CD4-positive, alpha-beta T cell (primary cell): ENCODE measurements at regions of chr13 and their contacts with region 1.

Region 1: DNA sequence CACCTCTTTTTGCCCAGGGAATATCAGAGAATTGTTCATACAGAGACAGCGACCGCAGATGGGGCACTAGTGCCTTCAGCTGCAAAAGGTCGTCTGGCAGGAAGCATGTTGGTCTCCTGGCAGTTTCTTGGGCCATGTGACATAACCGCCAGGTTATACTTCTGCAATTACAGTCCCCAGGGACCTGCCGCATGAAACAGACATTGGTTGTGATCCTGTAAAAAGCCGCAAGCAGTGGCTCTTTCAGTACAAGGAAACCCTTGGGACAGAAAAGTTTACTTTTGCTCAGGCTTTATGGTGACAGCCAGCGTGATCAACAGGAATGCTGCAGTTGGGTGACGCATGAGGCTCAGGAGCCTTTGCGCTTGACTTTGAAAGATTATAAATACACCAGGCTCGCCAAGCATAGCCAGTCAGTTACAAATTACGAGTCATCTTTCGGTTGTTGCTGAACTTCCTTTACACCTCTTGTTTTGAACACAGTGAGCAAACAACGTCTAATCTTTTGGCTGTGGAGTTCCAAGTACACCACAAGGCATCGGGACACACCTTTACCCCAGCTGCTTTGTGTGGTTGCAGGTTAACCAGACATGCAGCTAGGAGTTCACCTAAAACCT is 50.5 kb upstream of the UBE2L5 start:
- DNase-seq: peak; percentile 47 to 91 (median 60)
- ATAC-seq: peak; percentile 64
- H3K4me3 ChIP-seq: peak overlapping the region; percentile 30
- H3K4me3 Mint-ChIP-seq: peak overlapping the region; percentile 21
- H3K27ac ChIP-seq: peak overlapping the region; percentile 62 to 74
- H3K27ac Mint-ChIP-seq: peak overlapping the region; percentile 93
- H3K4me1 ChIP-seq: peaks cover 93% of the 10 kb centered on the region
- H3K4me1 Mint-ChIP-seq: peaks cover 82% of the 10 kb centered on the region
- H3K27me3 ChIP-seq: no peaks in the 10 kb centered on the region
- H3K27me3 Mint-ChIP-seq: no peaks in the 10 kb centered on the region
- CTCF ChIP-seq: no peak

Region 2: GRCh38 chr13:30346153-30346788 is 25.5 kb before region 1 on chr13:
- CTCF ChIA-PET with region 1: interaction called, 3 read pairs
- POLR2A ChIA-PET with region 1: interaction called, 22 read pairs
- intact Hi-C with region 1: no loop called
- DNase-seq: peak; percentile 30 to 89 (median 56)
- ATAC-seq: peak; percentile 93
- H3K4me3 ChIP-seq: peak overlapping the region; percentile 18
- H3K4me3 Mint-ChIP-seq: peak overlapping the region; percentile 61
- H3K27ac ChIP-seq: no peak overlapping the region
- H3K27ac Mint-ChIP-seq: peak overlapping the region; percentile 62
- H3K4me1 ChIP-seq: peaks cover 38% of the 10 kb centered on the region
- H3K4me1 Mint-ChIP-seq: peaks cover 55% of the 10 kb centered on the region
- H3K27me3 ChIP-seq: no peaks in the 10 kb centered on the region
- H3K27me3 Mint-ChIP-seq: no peaks in the 10 kb centered on the region
- CTCF ChIP-seq: no peak

Region 3: GRCh38 chr13:30388406-30389283 is 16.9 kb after region 1 on chr13:
- CTCF ChIA-PET with region 1: interaction called, 51 read pairs
- POLR2A ChIA-PET with region 1: interaction called, 254 read pairs
- intact Hi-C with region 1: loop called in 1 of 2 experiments (anchors 2 kb)
- DNase-seq: no peak
- ATAC-seq: no peak
- H3K4me3 ChIP-seq: peak overlapping the region; percentile 25
- H3K4me3 Mint-ChIP-seq: peak overlapping the region; percentile 60
- H3K27ac ChIP-seq: peak overlapping the region; percentile 38 to 56
- H3K27ac Mint-ChIP-seq: peak overlapping the region; percentile 75
- H3K4me1 ChIP-seq: peaks cover 41% of the 10 kb centered on the region
- H3K4me1 Mint-ChIP-seq: peaks cover 52% of the 10 kb centered on the region
- H3K27me3 ChIP-seq: no peaks in the 10 kb centered on the region
- H3K27me3 Mint-ChIP-seq: no peaks in the 10 kb centered on the region
- CTCF ChIP-seq: no peak

Region 4: DNA sequence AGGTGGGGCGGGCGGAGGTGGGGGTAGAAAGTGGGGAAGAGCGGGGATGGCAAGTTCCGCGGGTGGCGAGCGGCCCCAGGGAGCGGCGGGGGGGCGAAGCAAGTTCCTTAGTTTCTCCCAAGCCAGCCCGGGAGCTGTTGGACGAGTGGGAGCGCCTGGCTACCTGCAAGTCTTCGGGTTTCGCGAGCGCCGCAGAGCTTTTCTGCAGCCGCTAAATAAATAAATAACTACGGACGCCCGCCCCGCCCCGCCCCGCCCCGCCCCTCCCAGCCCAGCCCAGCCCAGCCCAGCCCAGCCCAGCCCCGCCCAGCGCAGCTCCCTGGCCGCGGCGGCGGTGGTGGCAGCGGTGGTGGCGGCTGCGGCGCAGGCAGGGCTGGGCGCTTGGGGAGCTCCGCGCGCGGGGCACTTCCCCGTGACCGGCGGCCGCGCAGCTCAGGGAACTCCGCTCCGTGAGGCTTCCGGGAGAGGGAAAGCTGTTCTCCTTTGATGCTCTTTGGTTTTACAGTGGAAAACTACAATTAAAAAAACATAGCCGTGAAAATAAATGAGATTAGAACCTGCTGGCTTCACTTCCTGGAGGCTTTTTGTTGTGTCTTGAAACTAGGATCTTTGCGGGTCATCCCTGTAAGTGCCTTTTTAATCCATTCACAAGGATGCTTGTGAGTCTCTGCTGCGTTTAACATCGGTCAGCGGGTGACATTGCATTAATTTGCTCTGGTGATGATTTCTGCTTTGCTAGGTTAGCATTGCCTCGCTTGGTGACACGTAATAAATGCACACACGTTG is 50.5 kb after region 1 on chr13 and contains the start of gene UBE2L5:
- CTCF ChIA-PET with region 1: interaction called, 4 read pairs
- POLR2A ChIA-PET with region 1: interaction called, 12 read pairs
- intact Hi-C with region 1: loop called in 1 of 2 experiments (anchors 2 kb)
- DNase-seq: peak in 13 of 14 experiments; percentile 40 to 88 (median 60)
- ATAC-seq: peak; percentile 93
- H3K4me3 ChIP-seq: peak within 1 kb of the TSS; percentile 60
- H3K4me3 Mint-ChIP-seq: peak within 1 kb of the TSS; percentile 91
- H3K27ac ChIP-seq: peak within 1 kb of the TSS in 1 of 2 donors; percentile 46
- H3K27ac Mint-ChIP-seq: peak within 1 kb of the TSS; percentile 83
- H3K4me1 ChIP-seq: peaks cover 12% of the 10 kb centered on the region
- H3K4me1 Mint-ChIP-seq: peaks cover 26% of the 10 kb centered on the region
- H3K27me3 ChIP-seq: no peaks in the 10 kb centered on the region
- H3K27me3 Mint-ChIP-seq: no peaks in the 10 kb centered on the region
- CTCF ChIP-seq: no peak
- total RNA-seq, gene UBE2L5: 0.11 TPM in 1 of 2 experiments, not detected in the other

Region 5: DNA sequence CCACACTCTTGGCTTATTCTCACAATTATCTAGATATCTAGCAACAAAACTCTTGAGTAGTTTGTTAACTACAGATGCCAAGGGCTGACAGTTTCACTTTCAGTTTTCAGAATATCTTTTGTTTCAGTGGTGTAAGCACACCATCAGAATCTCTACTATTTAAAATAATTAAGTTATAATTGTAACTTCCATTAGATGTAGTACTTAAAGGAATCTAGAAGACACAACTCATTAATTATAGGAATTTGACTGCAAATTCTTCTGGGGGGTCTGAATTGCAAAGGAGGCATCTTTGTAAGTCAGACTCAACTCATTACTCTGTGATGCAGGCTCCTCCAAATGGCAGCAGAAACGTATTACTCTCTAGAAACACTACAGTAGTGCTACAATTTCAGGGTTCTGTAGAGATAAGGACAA is 201.1 kb after region 1 on chr13:
- CTCF ChIA-PET with region 1: interaction called, 4 read pairs
- POLR2A ChIA-PET with region 1: no interaction called
- intact Hi-C with region 1: loop called in 1 of 2 experiments (anchors 10 kb)
- DNase-seq: peak in 5 of 14 experiments; percentile 9 to 67 (median 63)
- ATAC-seq: peak; percentile 55
- H3K4me3 ChIP-seq: peak overlapping the region; percentile 44
- H3K4me3 Mint-ChIP-seq: peak overlapping the region; percentile 82
- H3K27ac ChIP-seq: peak overlapping the region; percentile 16 to 38
- H3K27ac Mint-ChIP-seq: peak overlapping the region; percentile 95
- H3K4me1 ChIP-seq: peaks cover 15% of the 10 kb centered on the region
- H3K4me1 Mint-ChIP-seq: peaks cover 37% of the 10 kb centered on the region
- H3K27me3 ChIP-seq: no peaks in the 10 kb centered on the region
- H3K27me3 Mint-ChIP-seq: no peaks in the 10 kb centered on the region
- CTCF ChIP-seq: peak; percentile 31